ENCODE measurements at regions of chr10 and their contacts with region 1.

Region 1: GRCh38 chr10:12121673-12122072 is 7.8 kb upstream of the SEC61A2 start:
- DNase-seq: no peak
- ATAC-seq: no peak
- H3K4me3 Mint-ChIP-seq: peak overlapping the region; percentile 54
- H3K27ac Mint-ChIP-seq: peak overlapping the region; percentile 94
- H3K4me1 Mint-ChIP-seq: peaks cover 32% of the 10 kb centered on the region
- H3K27me3 Mint-ChIP-seq: no peaks in the 10 kb centered on the region

Region 2: DNA sequence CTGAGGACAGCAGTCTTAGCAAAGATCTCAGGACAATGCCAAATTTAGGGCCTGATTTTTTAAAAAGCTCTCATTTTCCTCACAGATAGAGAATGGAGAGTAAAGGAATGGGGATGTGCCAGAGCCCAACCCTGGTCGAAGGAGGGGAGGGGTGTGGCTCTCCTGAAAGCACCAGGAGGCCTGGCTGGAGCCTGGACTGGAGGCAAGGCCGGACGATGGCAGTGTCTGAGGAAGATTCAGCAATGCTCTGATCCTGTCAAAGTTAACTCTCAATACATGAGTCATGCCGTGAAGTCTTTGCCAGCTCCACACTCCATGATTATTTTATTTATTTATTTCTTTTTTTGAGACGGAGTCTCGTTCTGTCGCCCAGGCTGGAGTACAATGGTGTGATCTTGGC is 187.4 kb before region 1 on chr10:
- CTCF ChIA-PET with region 1: no interaction called
- POLR2A ChIA-PET with region 1: no interaction called
- intact Hi-C with region 1: no loop called
- DNase-seq: no peak
- ATAC-seq: no peak
- H3K4me3 Mint-ChIP-seq: no peak overlapping the region
- H3K27ac Mint-ChIP-seq: no peak overlapping the region
- H3K4me1 Mint-ChIP-seq: no peaks in the 10 kb centered on the region
- H3K27me3 Mint-ChIP-seq: no peaks in the 10 kb centered on the region

Region 3: DNA sequence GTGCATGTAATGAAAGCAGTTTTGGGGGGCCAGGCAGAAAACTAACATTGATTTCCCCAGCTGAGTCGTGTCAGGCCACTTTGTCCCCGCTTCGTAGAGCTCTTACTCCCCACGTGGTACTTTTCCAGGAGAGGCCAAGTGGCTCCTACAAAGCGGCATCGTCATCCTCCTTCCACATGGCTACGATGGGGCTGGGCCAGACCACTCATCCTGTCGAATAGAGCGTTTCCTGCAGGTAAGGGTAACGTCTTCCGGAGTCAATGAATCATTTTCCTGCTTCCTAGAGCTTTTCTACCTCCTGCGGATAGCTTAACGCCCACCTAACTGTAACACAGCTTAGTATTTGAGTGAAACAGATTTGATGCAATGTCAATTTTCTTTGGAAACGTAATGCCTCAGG is 13.9 kb before region 1 on chr10:
- CTCF ChIA-PET with region 1: interaction called, 4 read pairs
- POLR2A ChIA-PET with region 1: interaction called, 10 read pairs
- intact Hi-C with region 1: no loop called
- DNase-seq: no peak
- ATAC-seq: no peak
- H3K4me3 Mint-ChIP-seq: no peak overlapping the region
- H3K27ac Mint-ChIP-seq: no peak overlapping the region
- H3K4me1 Mint-ChIP-seq: peaks cover 21% of the 10 kb centered on the region
- H3K27me3 Mint-ChIP-seq: no peaks in the 10 kb centered on the region

Region 4: DNA sequence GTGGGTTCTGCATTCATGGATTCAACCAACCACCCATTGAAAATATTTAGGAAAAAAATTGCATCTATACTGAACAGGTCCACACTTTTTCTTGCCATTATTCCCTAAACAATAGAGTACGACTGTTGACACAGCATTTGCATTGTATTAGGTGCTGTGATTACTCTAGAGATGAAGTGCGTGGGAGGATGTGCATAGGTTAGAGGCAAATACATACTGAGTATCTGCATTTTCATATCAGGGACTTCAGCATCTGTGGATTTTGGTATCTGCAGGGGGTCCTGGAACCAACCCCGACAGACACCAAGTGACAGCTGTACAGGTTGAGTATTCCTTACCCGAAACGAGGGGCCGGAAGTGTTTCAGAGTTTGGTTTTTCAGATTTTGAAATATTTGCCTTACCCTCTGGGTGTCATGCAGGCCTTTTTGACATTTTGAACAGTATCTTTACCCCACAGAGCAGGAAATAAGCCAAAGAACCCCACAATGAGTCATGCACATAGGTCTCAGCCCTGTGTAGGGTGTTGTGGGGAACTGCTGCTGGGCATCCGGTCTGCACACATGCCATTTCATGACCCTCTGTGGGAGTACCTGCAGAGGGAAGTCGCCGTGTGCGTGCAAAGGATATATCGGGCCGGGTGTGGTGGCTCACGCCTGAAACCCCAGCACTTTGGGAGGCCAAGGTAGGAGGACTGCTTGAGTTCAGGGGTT is 59.5 kb after region 1 on chr10:
- CTCF ChIA-PET with region 1: no interaction called
- POLR2A ChIA-PET with region 1: no interaction called
- intact Hi-C with region 1: loop called in 1 of 2 experiments (anchors 5 kb)
- DNase-seq: peak; percentile 82
- ATAC-seq: peak; percentile 98
- H3K4me3 Mint-ChIP-seq: no peak overlapping the region
- H3K27ac Mint-ChIP-seq: peak overlapping the region; percentile 80
- H3K4me1 Mint-ChIP-seq: peaks cover 27% of the 10 kb centered on the region
- H3K27me3 Mint-ChIP-seq: no peaks in the 10 kb centered on the region

Measured in activated CD4-positive, alpha-beta T cell treated with anti-CD3 and anti-CD28 coated beads for 36 hours (primary cell).